ENCODE measurements at regions of chr10 and their contacts with region 1.

Region 1: DNA sequence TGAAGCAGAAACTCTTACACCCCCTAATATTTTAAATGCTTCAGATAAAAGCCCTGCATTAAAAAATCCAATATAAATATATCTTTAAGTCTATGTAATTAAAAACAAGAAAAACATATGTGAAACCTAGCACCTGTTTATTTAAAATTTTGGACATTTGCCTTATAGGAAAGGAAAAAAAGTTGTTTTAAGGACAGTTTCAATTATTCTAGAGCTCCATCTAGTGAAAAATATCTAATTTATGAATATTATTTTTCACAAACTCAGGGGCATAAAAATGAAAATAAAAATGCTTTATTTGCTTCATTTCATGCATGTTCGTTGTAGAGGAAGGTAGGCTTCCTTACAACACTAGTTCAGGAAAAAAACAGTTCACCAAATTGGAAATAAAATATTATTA is 26.1 kb downstream of the ENKUR start:
- DNase-seq: no peak
- ATAC-seq: no peak

Region 2: GRCh38 chr10:24642622-24643417 is 347.0 kb before region 1 on chr10:
- intact Hi-C with region 1: loop called (anchors 10 kb)
- DNase-seq: no peak
- ATAC-seq: peak; percentile 92

Region 3: GRCh38 chr10:25226775-25227682 is 237.2 kb after region 1 on chr10:
- intact Hi-C with region 1: no loop called
- DNase-seq: no peak
- ATAC-seq: peak; percentile 72